Lower leg skin (tissue), 4 donors: ENCODE measurements at regions of chr3 and their contacts with region 1.

Region 1: GRCh38 chr3:63349583-63350521 is 71.7 kb downstream of the SYNPR start:
- DNase-seq: peak in 1 of 2 donors; percentile 24
- H3K4me3 ChIP-seq: no peak overlapping the region
- CTCF ChIP-seq: no peak
- POLR2A ChIP-seq: no peak

Region 2: DNA sequence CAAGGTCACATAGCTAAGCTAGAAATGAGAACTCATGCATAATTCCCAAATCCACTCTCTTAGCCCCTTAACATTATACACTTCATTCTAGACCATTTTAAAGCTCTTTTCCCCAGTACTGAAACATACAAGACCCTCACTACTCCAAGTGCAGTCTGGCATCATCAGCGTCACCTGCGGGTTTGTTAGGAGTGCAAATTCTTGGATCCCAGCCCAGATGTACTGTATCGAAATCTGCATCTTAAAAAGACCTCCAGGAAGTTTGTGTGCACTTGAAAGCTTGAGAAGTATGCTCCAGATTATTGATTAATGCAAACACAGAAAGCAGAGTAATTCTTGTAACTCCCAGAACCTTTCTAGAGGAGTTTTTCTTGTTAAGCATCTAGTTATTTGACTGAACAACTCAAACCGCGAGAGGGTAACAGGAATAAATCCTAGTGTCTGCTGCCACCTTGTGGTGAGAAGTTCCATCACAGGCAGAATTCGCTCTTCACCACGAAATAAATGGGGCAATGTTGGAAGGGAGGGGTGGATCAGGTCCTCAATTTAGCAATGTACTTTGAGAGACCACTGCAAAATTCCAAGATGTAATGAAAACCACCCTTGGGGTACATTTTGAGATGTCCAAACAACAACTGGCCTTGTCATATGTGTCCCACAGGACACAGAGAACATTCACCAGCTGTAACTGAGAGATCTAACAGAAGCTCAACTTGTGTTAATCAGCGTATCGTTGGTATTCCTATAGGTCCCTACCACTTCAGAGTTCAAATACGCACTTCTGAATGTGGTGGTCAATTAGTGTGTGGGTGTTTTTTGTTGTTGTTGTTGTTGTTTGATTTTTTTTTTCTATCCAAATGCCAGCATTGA is 468.7 kb after region 1 on chr3:
- intact Hi-C with region 1: loop called (anchors 5 kb)
- DNase-seq: peak; percentile 58 to 88
- H3K4me3 ChIP-seq: no peak overlapping the region
- CTCF ChIP-seq: no peak
- POLR2A ChIP-seq: no peak

Region 3: GRCh38 chr3:64489361-64490044 is 1139.7 kb after region 1 on chr3:
- intact Hi-C with region 1: loop called (anchors 5 kb)
- DNase-seq: no peak
- H3K4me3 ChIP-seq: no peak overlapping the region
- CTCF ChIP-seq: no peak
- POLR2A ChIP-seq: no peak